ENCODE measurements at regions of chr1 and their contacts with region 1.

Region 1: GRCh38 chr1:93722081-93723031 is 40.7 kb upstream of the BCAR3 start:
- DNase-seq: peak; percentile 80

Region 2: DNA sequence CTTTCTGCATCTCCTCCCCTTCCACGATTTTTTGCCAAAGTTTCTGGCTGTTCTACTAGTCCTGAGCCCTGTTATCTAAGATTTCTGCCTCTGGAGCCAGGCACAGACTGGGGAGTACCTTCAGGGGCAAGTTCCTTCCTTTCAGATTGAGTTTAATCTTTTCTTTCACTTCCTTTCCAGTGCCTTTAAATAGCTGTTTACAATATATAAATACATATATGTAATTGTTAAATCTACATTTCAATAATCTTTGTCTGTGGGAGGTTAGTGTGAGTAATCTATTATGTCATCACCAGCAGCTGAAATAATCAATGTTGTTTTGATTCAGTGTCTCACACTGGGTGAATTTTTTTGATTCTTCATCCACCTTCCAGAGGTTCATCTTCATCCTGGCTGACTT is 792.9 kb before region 1 on chr1:
- intact Hi-C with region 1: no loop called
- DNase-seq: no peak

Region 3: GRCh38 chr1:93666613-93667384 is 55.6 kb before region 1 on chr1:
- intact Hi-C with region 1: loop called (anchors 5 kb)
- DNase-seq: no peak

Region 4: DNA sequence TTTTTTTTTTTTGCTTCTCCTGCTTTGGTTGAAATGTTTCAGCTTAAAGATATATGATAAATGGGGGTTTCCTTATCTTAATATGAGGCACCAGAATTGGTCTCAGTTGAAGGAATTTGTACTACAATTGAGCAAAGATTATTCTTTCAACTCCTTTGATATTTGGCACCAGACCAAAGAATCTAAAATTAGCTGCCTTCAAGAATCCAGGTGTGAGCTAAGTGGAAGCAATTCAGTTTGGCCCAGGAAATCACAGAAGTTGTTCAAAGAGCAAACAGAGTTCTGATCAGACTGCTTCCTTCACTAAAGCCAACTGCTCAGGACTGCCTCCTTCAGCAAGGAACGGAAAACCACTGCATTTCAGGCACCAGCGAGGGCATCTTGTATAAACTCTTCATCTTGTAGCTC is 27.5 kb after region 1 on chr1:
- intact Hi-C with region 1: loop called (anchors 2 kb)
- DNase-seq: no peak

Region 5: DNA sequence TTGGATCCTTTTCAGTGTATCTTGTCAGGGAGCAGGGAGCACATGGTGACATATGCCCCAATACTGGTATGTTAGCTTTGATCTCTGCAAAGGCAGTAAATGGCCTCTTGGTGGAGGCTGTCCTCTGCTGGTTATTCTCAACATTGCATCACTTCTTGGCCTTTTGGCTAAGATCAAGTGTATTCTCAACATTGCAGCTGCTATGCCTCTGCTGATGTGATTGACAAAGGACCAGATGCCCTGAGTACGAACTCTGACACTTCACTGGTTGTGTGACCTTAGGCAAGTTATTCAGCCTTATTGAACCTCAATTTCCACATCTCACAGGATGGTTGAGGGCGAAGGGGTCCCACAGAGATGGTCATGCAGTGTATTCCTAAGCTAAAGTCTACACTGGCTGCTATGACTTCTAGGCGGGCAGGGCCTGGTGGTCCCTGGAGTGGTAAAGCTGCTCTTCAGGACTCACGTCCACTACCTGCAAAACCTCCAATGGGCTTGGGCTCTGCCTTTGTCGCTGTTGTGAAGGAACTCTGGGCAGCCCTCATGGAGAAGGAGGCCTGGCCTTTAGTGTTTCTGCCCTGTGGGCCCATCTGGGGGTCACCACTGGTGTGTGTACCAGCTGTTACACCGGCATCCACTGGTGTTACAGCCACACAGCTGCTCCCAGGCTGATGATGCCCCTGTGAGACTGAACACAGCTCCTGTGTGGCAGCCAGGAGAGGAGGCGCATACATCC is 91.9 kb after region 1 on chr1:
- intact Hi-C with region 1: loop called (anchors 5 kb)
- DNase-seq: no peak

Region 6: GRCh38 chr1:93899543-93900207 is 177.3 kb after region 1 on chr1:
- intact Hi-C with region 1: no loop called
- DNase-seq: no peak

Measured in cardiac septum (tissue), 1 donor.